CD4-positive, alpha-beta T cell (primary cell): ENCODE measurements at regions of chr2 and their contacts with region 1.

Region 1: DNA sequence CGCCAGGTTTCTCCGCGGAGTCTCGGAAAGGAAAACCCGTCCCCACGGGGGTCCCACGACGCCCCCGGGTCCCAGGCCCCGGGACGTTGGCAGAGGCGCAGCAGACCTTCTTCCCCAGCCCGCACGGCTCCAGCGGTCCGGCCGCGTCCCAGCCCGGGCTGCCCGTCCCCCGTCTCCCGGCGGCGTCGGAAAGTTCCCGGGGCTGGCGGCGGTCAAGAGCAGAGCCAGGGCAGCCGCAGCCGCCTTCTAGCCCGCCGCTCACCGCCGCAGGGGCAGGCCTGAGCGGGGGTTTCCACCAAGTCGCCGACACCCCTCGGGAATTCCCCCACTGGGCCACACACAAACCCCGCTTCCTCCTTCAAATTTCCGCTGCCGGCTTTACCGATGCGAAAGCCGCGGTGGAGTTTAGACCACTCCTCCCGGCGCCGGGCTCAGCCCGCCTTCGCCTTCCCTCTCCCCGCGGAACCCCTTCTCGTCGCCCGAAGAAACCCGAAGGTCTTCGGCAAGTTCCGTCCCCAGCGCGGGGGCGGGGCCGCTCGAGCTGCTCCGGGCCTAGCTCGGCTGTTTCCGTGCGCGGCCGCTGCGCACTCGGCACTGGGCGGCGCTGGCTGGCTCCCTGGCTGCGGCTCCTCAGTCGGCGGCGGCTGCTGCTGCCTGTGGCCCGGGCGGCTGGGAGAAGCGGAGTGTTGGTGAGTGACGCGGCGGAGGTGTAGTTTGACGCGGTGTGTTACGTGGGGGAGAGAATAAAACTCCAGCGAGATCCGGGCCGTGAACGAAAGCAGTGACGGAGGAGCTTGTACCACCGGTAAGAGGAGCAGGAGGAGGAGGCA is at the start of gene CREB1:
- DNase-seq: peak; percentile 99 to 100 (median 100)
- ATAC-seq: peak; percentile 80
- H3K4me3 ChIP-seq: peak within 1 kb of the TSS; percentile 88
- H3K4me3 Mint-ChIP-seq: peak within 1 kb of the TSS; percentile 99
- H3K27ac ChIP-seq: peak within 1 kb of the TSS; percentile 100
- H3K27ac Mint-ChIP-seq: peak within 1 kb of the TSS; percentile 97
- H3K4me1 ChIP-seq: peaks cover 48% of the 10 kb centered on the region
- H3K4me1 Mint-ChIP-seq: peaks cover 78% of the 10 kb centered on the region
- H3K27me3 ChIP-seq: no peaks in the 10 kb centered on the region
- H3K27me3 Mint-ChIP-seq: no peaks in the 10 kb centered on the region
- CTCF ChIP-seq: no peak
- total RNA-seq, gene CREB1: 62.5 to 67.1 TPM

Region 2: GRCh38 chr2:206597717-206598218 is 931.8 kb before region 1 on chr2:
- CTCF ChIA-PET with region 1: no interaction called
- POLR2A ChIA-PET with region 1: no interaction called
- intact Hi-C with region 1: no loop called
- DNase-seq: no peak
- ATAC-seq: no peak
- H3K4me3 ChIP-seq: no peak overlapping the region
- H3K4me3 Mint-ChIP-seq: no peak overlapping the region
- H3K27ac ChIP-seq: no peak overlapping the region
- H3K27ac Mint-ChIP-seq: no peak overlapping the region
- H3K4me1 ChIP-seq: no peaks in the 10 kb centered on the region
- H3K4me1 Mint-ChIP-seq: no peaks in the 10 kb centered on the region
- H3K27me3 ChIP-seq: no peaks in the 10 kb centered on the region
- H3K27me3 Mint-ChIP-seq: no peaks in the 10 kb centered on the region
- CTCF ChIP-seq: no peak

Region 3: DNA sequence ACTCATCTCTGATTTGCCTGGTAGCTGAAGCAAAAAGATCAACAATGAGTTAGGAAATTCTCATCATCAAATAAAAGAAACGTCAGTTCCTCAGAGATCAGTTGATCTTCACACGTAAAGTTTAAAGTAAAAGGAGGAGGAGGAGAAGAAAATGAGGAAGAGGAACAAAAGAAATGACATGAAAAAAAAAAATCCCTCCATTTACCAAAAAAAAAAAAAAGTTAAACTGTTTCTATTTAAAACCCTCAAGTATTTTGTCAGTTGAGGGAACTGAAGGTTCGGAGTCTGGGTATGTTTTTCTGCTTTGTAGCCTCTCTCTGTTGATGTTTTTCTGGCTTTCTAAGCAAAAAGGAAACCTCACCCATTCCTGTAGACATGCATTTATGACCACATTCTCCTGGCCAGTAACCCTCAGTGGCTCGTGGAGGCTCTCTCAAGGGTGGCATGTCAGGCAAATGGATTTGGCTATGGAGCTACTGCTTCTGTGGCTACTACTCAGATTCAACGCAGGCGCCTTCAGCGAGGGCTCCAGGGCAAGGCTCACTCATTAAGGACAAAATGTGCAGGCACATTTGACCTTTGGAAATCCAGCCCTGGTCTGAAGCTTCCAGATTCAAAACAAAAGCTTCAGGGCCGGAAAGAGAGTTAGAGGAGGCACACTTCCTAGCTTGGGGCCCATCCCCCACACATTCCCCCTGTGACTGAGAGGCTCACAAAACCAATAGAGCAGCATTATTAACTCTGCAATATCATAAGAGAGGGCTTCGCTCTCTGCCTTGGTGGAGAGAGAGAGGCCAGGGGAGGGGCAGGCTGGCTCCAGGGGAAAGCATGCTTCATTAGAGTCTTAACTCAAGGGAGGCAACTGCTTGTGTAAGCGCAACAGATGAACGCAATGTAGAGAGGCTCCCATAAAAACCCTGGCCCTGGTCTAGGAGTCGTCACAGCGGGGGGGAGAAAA is 386.1 kb before region 1 on chr2:
- CTCF ChIA-PET with region 1: no interaction called
- POLR2A ChIA-PET with region 1: interaction called, 19 read pairs
- intact Hi-C with region 1: no loop called
- DNase-seq: peak; percentile 35 to 80 (median 60)
- ATAC-seq: peak; percentile 74
- H3K4me3 ChIP-seq: peak overlapping the region; percentile 52
- H3K4me3 Mint-ChIP-seq: peak overlapping the region; percentile 49
- H3K27ac ChIP-seq: peak overlapping the region; percentile 89 to 91
- H3K27ac Mint-ChIP-seq: peak overlapping the region; percentile 89
- H3K4me1 ChIP-seq: peaks cover 43% of the 10 kb centered on the region
- H3K4me1 Mint-ChIP-seq: peaks cover 69% of the 10 kb centered on the region
- H3K27me3 ChIP-seq: no peaks in the 10 kb centered on the region
- H3K27me3 Mint-ChIP-seq: no peaks in the 10 kb centered on the region
- CTCF ChIP-seq: no peak

Region 4: DNA sequence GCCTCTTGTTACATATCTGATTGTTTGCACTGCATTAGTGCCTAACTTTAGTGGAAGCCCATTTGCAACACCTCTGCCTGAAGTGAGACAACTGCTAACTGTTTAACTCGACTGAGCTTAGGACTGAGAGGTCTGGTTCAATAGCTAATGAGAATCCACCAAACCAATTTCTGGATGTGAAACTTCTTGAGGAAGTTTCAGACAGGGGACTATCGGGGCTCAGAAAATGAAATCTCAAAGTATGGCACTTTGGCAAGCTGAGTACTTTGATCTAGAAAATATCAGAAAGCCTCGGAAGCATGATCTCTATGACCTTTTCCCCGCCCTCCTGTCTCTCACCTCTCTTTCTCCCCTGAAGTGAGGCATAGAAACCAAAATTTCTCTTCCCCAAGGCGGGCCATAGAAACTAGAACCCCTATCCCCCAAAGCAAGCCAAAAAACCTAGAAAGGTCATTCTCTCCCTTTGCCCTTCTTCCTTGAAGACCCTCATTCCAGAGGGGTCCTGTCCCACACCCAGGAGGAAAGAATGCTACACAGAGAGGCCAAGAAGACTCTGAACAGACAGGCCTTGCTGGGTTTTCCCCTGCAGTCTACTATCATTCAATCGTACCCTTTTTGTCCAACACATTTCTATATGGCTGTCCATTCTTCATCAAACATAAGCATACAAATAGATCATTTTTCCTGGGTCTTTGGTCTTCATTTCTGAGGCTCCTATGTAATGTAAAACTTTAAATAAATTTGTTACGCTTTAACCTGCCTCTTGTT is 69.4 kb before region 1 on chr2:
- CTCF ChIA-PET with region 1: no interaction called
- POLR2A ChIA-PET with region 1: no interaction called
- intact Hi-C with region 1: no loop called
- DNase-seq: no peak
- ATAC-seq: no peak
- H3K4me3 ChIP-seq: no peak overlapping the region
- H3K4me3 Mint-ChIP-seq: no peak overlapping the region
- H3K27ac ChIP-seq: no peak overlapping the region
- H3K27ac Mint-ChIP-seq: no peak overlapping the region
- H3K4me1 ChIP-seq: no peaks in the 10 kb centered on the region
- H3K4me1 Mint-ChIP-seq: no peaks in the 10 kb centered on the region
- H3K27me3 ChIP-seq: no peaks in the 10 kb centered on the region
- H3K27me3 Mint-ChIP-seq: no peaks in the 10 kb centered on the region
- CTCF ChIP-seq: no peak

Region 5: GRCh38 chr2:207503234-207503633 is 26.3 kb before region 1 on chr2:
- CTCF ChIA-PET with region 1: interaction called, 4 read pairs
- POLR2A ChIA-PET with region 1: interaction called, 62 read pairs
- intact Hi-C with region 1: loop called in 1 of 2 experiments (anchors 2 kb)
- DNase-seq: peak in 1 of 14 experiments; percentile 51
- ATAC-seq: no peak
- H3K4me3 ChIP-seq: no peak overlapping the region
- H3K4me3 Mint-ChIP-seq: no peak overlapping the region
- H3K27ac ChIP-seq: no peak overlapping the region
- H3K27ac Mint-ChIP-seq: no peak overlapping the region
- H3K4me1 ChIP-seq: peaks cover 21% of the 10 kb centered on the region
- H3K4me1 Mint-ChIP-seq: peaks cover 34% of the 10 kb centered on the region
- H3K27me3 ChIP-seq: no peaks in the 10 kb centered on the region
- H3K27me3 Mint-ChIP-seq: no peaks in the 10 kb centered on the region
- CTCF ChIP-seq: no peak

Region 6: DNA sequence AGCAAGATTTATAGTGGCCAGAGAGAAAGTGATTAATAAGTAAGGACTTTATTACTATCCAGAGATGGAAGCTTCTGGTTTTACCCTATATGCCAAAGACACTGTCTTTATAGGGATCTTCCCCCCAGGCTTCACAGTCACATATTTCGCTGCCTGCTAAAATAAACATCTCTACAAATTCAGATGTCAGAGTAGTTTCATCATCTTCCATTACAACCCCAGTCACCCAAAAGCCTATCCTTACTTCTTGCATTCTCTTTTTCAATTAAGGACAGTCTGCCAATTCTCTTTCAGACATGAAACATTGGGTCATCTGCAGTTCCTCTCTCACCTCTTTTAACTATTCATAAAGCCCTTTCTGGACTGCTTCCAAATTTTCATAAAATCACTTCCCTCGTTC is 28.6 kb after region 1 on chr2:
- CTCF ChIA-PET with region 1: interaction called, 3 read pairs
- POLR2A ChIA-PET with region 1: interaction called, 36 read pairs
- intact Hi-C with region 1: no loop called
- DNase-seq: no peak
- ATAC-seq: no peak
- H3K4me3 ChIP-seq: no peak overlapping the region
- H3K4me3 Mint-ChIP-seq: no peak overlapping the region
- H3K27ac ChIP-seq: no peak overlapping the region
- H3K27ac Mint-ChIP-seq: no peak overlapping the region
- H3K4me1 ChIP-seq: peaks cover 1% of the 10 kb centered on the region
- H3K4me1 Mint-ChIP-seq: peaks cover 51% of the 10 kb centered on the region
- H3K27me3 ChIP-seq: no peaks in the 10 kb centered on the region
- H3K27me3 Mint-ChIP-seq: no peaks in the 10 kb centered on the region
- CTCF ChIP-seq: no peak

Region 7: GRCh38 chr2:207625018-207625907 is 95.7 kb after region 1 on chr2 and contains the start of gene METTL21A:
- CTCF ChIA-PET with region 1: interaction called, 20 read pairs
- POLR2A ChIA-PET with region 1: interaction called, 194 read pairs
- intact Hi-C with region 1: loop called (anchors 1 to 2 kb)
- DNase-seq: peak; percentile 89 to 99 (median 92)
- ATAC-seq: peak; percentile 77
- H3K4me3 ChIP-seq: peak within 1 kb of the TSS; percentile 99
- H3K4me3 Mint-ChIP-seq: peak within 1 kb of the TSS; percentile 98
- H3K27ac ChIP-seq: peak within 1 kb of the TSS; percentile 97 to 98
- H3K27ac Mint-ChIP-seq: peak within 1 kb of the TSS; percentile 96
- H3K4me1 ChIP-seq: peaks cover 46% of the 10 kb centered on the region
- H3K4me1 Mint-ChIP-seq: peaks cover 51% of the 10 kb centered on the region
- H3K27me3 ChIP-seq: no peaks in the 10 kb centered on the region
- H3K27me3 Mint-ChIP-seq: no peaks in the 10 kb centered on the region
- CTCF ChIP-seq: peak; percentile 68
- total RNA-seq, gene METTL21A: 10.8 to 11.9 TPM

Region 8: GRCh38 chr2:207655000-207655399 is 125.5 kb after region 1 on chr2:
- CTCF ChIA-PET with region 1: no interaction called
- POLR2A ChIA-PET with region 1: no interaction called
- intact Hi-C with region 1: no loop called
- DNase-seq: no peak
- ATAC-seq: no peak
- H3K4me3 ChIP-seq: no peak overlapping the region
- H3K4me3 Mint-ChIP-seq: no peak overlapping the region
- H3K27ac ChIP-seq: no peak overlapping the region
- H3K27ac Mint-ChIP-seq: no peak overlapping the region
- H3K4me1 ChIP-seq: no peaks in the 10 kb centered on the region
- H3K4me1 Mint-ChIP-seq: no peaks in the 10 kb centered on the region
- H3K27me3 ChIP-seq: no peaks in the 10 kb centered on the region
- H3K27me3 Mint-ChIP-seq: no peaks in the 10 kb centered on the region
- CTCF ChIP-seq: no peak